Activated CD4-positive, alpha-beta memory T cell treated with anti-CD3 and anti-CD28 coated beads for 36 hours (primary cell): ENCODE measurements at regions of chr9 and their contacts with region 1.

Region 1: DNA sequence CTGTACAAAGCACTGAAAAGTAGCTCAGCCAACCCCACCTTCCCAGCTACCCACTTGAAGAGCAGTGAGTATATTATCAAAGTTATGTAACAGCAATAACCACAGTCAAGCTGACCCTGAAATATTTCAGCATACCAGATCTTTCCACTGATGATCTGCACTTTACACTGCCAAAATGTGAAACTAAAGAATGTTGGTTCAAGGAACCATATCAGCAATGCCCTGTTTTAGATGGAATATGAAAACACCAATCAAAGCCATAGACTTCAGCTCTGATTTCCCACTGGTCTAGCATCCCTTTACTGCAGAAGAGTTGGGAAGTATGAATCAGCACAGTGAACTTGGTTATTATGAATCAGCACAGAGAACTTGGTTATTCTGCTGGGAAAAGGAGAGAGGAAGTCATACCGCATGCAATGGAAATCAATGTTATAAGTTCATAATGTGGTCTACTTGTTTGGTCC is 20.0 kb downstream of the CEMIP2 start:
- DNase-seq: no peak
- H3K4me3 Mint-ChIP-seq: no peak overlapping the region
- H3K27ac Mint-ChIP-seq: peak overlapping the region; percentile 51
- H3K4me1 Mint-ChIP-seq: peaks cover 38% of the 10 kb centered on the region
- H3K27me3 Mint-ChIP-seq: no peaks in the 10 kb centered on the region

Region 2: DNA sequence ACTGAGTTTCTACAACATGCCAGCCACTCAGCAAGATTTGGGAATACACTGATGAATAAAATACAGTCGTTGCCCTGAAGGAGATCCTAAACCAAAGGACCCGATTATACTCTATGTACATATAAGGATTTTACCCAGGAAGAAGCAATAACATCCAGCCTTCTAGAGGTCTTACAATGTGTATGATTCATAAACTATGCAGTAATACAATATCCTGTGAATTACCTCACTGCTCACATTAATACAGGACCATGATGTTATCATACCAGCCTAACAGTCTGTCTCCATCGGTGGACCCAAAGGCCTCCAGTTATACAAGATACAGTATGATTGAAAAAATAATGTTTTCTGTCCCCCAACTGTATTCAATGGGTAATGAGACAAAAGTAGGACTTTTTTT is 316.4 kb before region 1 on chr9:
- CTCF ChIA-PET with region 1: no interaction called
- POLR2A ChIA-PET with region 1: no interaction called
- intact Hi-C with region 1: no loop called
- DNase-seq: no peak
- H3K4me3 Mint-ChIP-seq: no peak overlapping the region
- H3K27ac Mint-ChIP-seq: no peak overlapping the region
- H3K4me1 Mint-ChIP-seq: no peaks in the 10 kb centered on the region
- H3K27me3 Mint-ChIP-seq: peaks cover 5% of the 10 kb centered on the region

Region 3: DNA sequence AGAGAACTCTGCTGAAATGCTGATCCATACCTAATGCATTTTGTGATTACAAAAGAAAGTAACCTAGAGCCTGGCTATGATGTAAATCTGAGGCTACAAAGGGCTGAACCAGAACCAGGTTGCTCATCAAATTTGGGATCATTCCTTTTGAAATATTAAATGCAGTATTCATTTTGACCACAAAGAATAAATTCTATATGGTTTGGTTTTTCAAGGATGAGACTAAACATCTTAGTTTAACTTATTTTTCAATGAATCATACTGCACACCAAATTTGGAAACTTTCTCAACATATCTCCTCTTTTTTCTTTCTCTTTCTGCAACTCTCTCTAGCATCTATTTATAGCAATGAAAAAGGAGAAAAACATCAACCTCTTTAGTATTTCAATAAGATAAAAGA is 26.5 kb before region 1 on chr9:
- CTCF ChIA-PET with region 1: no interaction called
- POLR2A ChIA-PET with region 1: no interaction called
- intact Hi-C with region 1: no loop called
- DNase-seq: no peak
- H3K4me3 Mint-ChIP-seq: no peak overlapping the region
- H3K27ac Mint-ChIP-seq: no peak overlapping the region
- H3K4me1 Mint-ChIP-seq: no peaks in the 10 kb centered on the region
- H3K27me3 Mint-ChIP-seq: no peaks in the 10 kb centered on the region

Region 4: GRCh38 chr9:71734953-71735352 is 13.4 kb before region 1 on chr9:
- CTCF ChIA-PET with region 1: interaction called, 4 read pairs
- POLR2A ChIA-PET with region 1: no interaction called
- intact Hi-C with region 1: loop called (anchors 2 kb)
- DNase-seq: no peak
- H3K4me3 Mint-ChIP-seq: no peak overlapping the region
- H3K27ac Mint-ChIP-seq: peak overlapping the region; percentile 44
- H3K4me1 Mint-ChIP-seq: peaks cover 16% of the 10 kb centered on the region
- H3K27me3 Mint-ChIP-seq: no peaks in the 10 kb centered on the region